Transverse colon (tissue), 4 donors: ENCODE measurements at regions of chr10 and their contacts with region 1.

Region 1: DNA sequence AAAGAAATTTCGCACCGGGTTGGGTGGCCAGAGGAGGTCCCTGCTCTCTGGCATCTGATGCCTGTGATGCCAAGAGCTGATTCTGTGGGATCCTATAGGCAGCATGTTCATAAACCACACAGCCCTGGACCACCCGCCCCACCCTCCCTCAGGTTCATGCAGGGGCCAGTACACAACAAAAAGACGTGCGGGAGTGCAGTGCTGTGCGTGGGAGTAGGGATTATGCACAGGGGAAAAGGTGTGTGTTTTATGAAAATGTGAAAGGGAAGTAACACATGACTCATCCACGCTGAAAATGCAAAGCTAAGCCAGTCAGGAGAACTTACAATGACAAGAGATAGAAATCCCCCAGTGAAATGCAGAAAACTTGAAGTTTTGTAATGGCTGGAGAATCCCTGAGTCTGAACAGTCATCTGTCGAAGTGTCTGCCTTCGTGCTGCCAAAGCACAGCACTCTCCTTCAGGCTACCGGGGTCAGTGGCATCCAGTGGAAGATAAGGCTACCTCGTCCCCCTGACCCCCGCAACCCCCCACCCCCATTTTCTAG is 1.1 kb downstream of the KIAA1217 start:
- DNase-seq: no peak
- H3K4me3 ChIP-seq: peak overlapping the region in 3 of 4 donors; percentile 46 to 75 (median 58)
- H3K27ac ChIP-seq: peak overlapping the region; percentile 81 to 89 (median 87)
- H3K4me1 ChIP-seq: peaks cover 16 to 43% (median 35%) of the 10 kb centered on the region in 4 donors
- H3K27me3 ChIP-seq: no peaks in the 10 kb centered on the region
- CTCF ChIP-seq: no peak
- EP300 ChIP-seq: no peak
- POLR2A ChIP-seq: no peak

Region 2: GRCh38 chr10:24249829-24250415 is 39.9 kb after region 1 on chr10:
- in situ Hi-C with region 1: no loop called
- intact Hi-C with region 1: no loop called
- DNase-seq: no peak
- H3K4me3 ChIP-seq: no peak overlapping the region
- H3K27ac ChIP-seq: no peak overlapping the region
- H3K4me1 ChIP-seq: no peaks in the 10 kb centered on the region
- H3K27me3 ChIP-seq: no peaks in the 10 kb centered on the region
- CTCF ChIP-seq: no peak
- EP300 ChIP-seq: no peak
- POLR2A ChIP-seq: no peak

Region 3: GRCh38 chr10:24503461-24504320 is 293.7 kb after region 1 on chr10:
- in situ Hi-C with region 1: loop called in 1 of 4 experiments (anchors 25 kb)
- intact Hi-C with region 1: no loop called
- DNase-seq: peak; percentile 65
- H3K4me3 ChIP-seq: no peak overlapping the region
- H3K27ac ChIP-seq: no peak overlapping the region
- H3K4me1 ChIP-seq: peaks cover 0 to 4% (median 0%) of the 10 kb centered on the region in 4 donors
- H3K27me3 ChIP-seq: no peaks in the 10 kb centered on the region
- CTCF ChIP-seq: peak; percentile 37 to 71 (median 60)
- EP300 ChIP-seq: no peak
- POLR2A ChIP-seq: no peak